Endothelial cell of umbilical vein (primary cell): ENCODE measurements at regions of chr1 and their contacts with region 1.

Region 1: DNA sequence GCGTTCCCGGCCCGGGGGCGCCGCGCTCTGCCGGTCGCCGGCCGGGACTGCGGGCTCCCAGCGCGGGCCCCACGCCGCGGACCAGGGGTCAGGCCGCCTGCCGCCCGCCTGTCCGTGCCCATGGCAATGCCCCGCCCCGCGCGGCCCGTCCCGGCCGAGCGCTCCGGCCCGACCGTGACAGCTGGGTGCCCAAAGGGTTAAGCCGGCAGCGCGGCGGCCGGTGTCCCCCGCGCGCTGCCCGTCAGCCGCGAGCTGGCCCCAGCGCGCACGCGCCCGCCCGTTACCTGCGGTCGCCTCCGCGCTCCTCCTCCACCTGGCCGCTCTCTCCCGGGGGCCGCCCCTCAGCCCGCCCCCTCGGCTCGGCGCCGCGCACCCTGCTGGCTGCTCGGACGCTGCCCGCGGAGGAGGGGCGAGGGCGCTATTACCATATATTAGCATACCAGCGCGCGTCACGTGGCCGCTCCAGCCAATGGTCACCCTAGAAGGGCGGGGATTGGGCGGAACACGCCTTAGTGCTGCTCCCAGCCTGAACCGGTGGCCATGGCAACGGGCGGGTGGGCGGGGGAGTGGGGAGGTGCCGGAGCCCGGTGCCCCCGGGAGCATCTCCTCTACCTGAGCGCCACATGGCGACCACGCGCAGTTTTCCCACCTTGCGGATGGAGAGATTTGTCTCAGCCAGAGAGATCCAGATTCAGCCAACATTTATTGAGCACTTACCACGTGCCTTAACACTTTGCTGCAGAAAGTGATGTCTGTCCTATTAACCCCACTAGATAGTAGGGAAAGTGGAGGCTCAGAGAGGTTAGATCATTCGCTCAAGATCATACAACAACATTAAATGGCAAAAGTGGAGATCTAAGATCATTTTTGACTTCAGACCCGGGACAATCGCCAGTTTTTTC is at the start of gene PHC2:
- DNase-seq: peak; percentile 96
- H3K4me3 ChIP-seq: peak within 1 kb of the TSS; percentile 36 to 66 (median 55)
- H3K27ac ChIP-seq: peak within 1 kb of the TSS; percentile 2
- H3K4me1 ChIP-seq: peaks cover 30% of the 10 kb centered on the region
- H3K27me3 ChIP-seq: no peaks in the 10 kb centered on the region
- CTCF ChIP-seq: peak in 1 of 2 donors; percentile 22
- POLR2A ChIP-seq: no peak
- total RNA-seq, gene PHC2: 79.0 and 82.3 TPM in 2 replicates

Region 2: GRCh38 chr1:33119532-33120217 is 311.3 kb before region 1 on chr1:
- CTCF ChIA-PET with region 1: no interaction called
- POLR2A ChIA-PET with region 1: no interaction called
- dilution Hi-C with region 1: no loop called
- intact Hi-C with region 1: no loop called
- DNase-seq: no peak
- H3K4me3 ChIP-seq: no peak overlapping the region
- H3K27ac ChIP-seq: no peak overlapping the region
- H3K4me1 ChIP-seq: no peaks in the 10 kb centered on the region
- H3K27me3 ChIP-seq: peaks cover 2 to 4% of the 10 kb centered on the region in 2 experiments
- CTCF ChIP-seq: no peak
- POLR2A ChIP-seq: no peak

Region 3: GRCh38 chr1:33348676-33349080 is 82.3 kb before region 1 on chr1:
- CTCF ChIA-PET with region 1: no interaction called
- POLR2A ChIA-PET with region 1: no interaction called
- dilution Hi-C with region 1: no loop called
- intact Hi-C with region 1: loop called (anchors 1 kb)
- DNase-seq: peak; percentile 44
- H3K4me3 ChIP-seq: peak overlapping the region; percentile 74 to 95 (median 77)
- H3K27ac ChIP-seq: peak overlapping the region; percentile 94
- H3K4me1 ChIP-seq: peaks cover 45% of the 10 kb centered on the region
- H3K27me3 ChIP-seq: no peaks in the 10 kb centered on the region
- CTCF ChIP-seq: no peak
- POLR2A ChIP-seq: no peak

Region 4: GRCh38 chr1:33443705-33444180 is 12.8 kb after region 1 on chr1:
- CTCF ChIA-PET with region 1: interaction called, 10 read pairs
- POLR2A ChIA-PET with region 1: interaction called, 3 read pairs
- dilution Hi-C with region 1: no loop called
- intact Hi-C with region 1: loop called (anchors 1 kb)
- DNase-seq: no peak
- H3K4me3 ChIP-seq: no peak overlapping the region
- H3K27ac ChIP-seq: no peak overlapping the region
- H3K4me1 ChIP-seq: peaks cover 17% of the 10 kb centered on the region
- H3K27me3 ChIP-seq: no peaks in the 10 kb centered on the region
- CTCF ChIP-seq: no peak
- POLR2A ChIP-seq: no peak